Heart left ventricle (tissue), 16 donors: ENCODE measurements at regions of chr5 and their contacts with region 1.

Region 1: GRCh38 chr5:32241034-32241783 is 67.1 kb upstream of the GOLPH3 start:
- DNase-seq: no peak
- ATAC-seq: no peak
- H3K4me3 ChIP-seq: no peak overlapping the region
- H3K27ac ChIP-seq: no peak overlapping the region
- H3K4me1 ChIP-seq: no peaks in the 10 kb centered on the region
- H3K27me3 ChIP-seq: no peaks in the 10 kb centered on the region
- CTCF ChIP-seq: no peak
- POLR2A ChIP-seq: no peak

Region 2: DNA sequence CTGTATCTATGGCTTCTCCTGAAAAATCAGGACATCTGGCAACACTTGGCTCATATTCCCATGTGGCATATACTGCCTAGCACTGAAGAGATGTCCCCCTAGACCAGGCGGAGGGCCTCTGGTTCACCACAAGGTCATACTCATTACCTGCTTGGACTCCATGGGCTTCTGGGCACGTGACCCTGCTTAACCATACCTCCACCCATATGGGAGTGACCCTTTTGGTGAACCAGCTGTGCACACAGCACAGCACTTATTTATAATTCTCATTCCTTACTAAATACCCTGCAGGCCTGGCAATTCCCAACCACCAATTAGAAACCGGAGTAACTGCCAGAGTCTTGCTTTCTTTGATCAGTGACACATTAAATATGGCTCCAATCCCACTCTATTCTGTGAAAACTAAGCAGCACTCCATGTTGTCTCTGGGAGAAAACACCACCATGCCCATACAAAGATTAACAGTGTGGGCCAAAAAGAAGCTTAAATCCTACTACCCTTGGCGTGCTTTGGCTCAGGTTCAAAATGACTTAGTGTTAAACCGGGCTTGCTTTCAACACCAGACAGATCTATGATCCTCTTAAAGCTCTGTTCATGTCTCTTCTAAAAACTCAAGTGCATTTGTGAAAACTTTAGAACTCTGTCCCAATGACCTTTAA is 13.8 kb after region 1 on chr5:
- intact Hi-C with region 1: loop called in 1 of 10 experiments (anchors 1 kb)
- DNase-seq: no peak
- ATAC-seq: peak; percentile 50 to 91 (median 70)
- H3K4me3 ChIP-seq: no peak overlapping the region
- H3K27ac ChIP-seq: peak overlapping the region in 9 of 12 donors; percentile 6 to 67 (median 35)
- H3K4me1 ChIP-seq: peaks cover 0 to 25% (median 8%) of the 10 kb centered on the region in 12 donors
- H3K27me3 ChIP-seq: no peaks in the 10 kb centered on the region
- CTCF ChIP-seq: no peak
- POLR2A ChIP-seq: no peak

Region 3: GRCh38 chr5:32511776-32512374 is 270.7 kb after region 1 on chr5:
- intact Hi-C with region 1: no loop called
- DNase-seq: no peak
- ATAC-seq: no peak
- H3K4me3 ChIP-seq: no peak overlapping the region
- H3K27ac ChIP-seq: no peak overlapping the region
- H3K4me1 ChIP-seq: peaks cover 0 to 12% (median under 1%) of the 10 kb centered on the region in 12 donors
- H3K27me3 ChIP-seq: no peaks in the 10 kb centered on the region
- CTCF ChIP-seq: no peak
- POLR2A ChIP-seq: no peak

Region 4: DNA sequence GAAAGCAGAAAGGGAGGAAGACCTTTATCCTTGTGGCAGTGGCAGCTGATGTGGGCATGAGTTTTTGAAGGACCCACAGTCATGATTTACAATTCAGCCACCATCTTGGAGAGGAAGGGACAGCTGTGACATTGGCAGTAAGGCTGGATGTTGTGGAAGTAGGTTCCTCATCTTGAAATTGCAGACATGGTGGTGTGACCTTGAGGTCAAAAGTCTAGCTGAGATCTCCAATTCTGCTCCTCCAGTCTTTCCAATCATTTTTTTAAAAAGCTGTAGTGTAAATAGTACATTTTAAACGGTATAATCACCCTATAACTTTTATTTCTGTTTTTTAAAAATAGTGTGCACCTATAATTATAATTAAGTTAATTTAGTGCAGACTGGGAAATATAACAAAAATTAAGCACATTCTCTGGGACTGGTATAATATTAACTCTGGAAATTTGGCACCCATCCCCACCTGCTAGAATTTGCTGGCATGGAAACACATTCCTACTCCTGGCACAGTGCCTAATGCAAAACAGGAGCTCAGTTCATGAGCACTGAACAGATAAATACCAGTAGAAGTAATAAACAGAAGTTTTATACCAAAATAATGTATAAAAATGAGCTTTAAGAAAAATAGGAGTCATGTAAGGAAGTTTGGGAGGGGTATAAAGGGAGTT is 446.1 kb after region 1 on chr5:
- intact Hi-C with region 1: no loop called
- DNase-seq: peak in 4 of 5 donors; percentile 47 to 70 (median 62)
- ATAC-seq: peak; percentile 53 to 87 (median 71)
- H3K4me3 ChIP-seq: no peak overlapping the region
- H3K27ac ChIP-seq: peak overlapping the region in 7 of 12 donors; percentile 1 to 63 (median 41)
- H3K4me1 ChIP-seq: peaks cover 0 to 21% (median 7%) of the 10 kb centered on the region in 12 donors
- H3K27me3 ChIP-seq: no peaks in the 10 kb centered on the region
- CTCF ChIP-seq: no peak
- POLR2A ChIP-seq: no peak